ENCODE measurements at regions of chr12 and their contacts with region 1.

Region 1: GRCh38 chr12:6752921-6753771 is at the start of gene MLF2:
- H3K4me3 ChIP-seq: peak within 1 kb of the TSS; percentile 99
- H3K27ac ChIP-seq: peak within 1 kb of the TSS; percentile 93
- H3K4me1 ChIP-seq: 0 out of 2 replicates have a peak, but pooled peaks cover 2% of the 10 kb centered on the region
- CTCF ChIP-seq: no peak; the same call in 1 of the 2 replicates

Region 2: GRCh38 chr12:6662906-6663742 is 90.0 kb before region 1 on chr12 and contains the start of gene ING4:
- CTCF ChIA-PET with region 1: no interaction called
- POLR2A ChIA-PET with region 1: no interaction called
- H3K4me3 ChIP-seq: peak within 1 kb of the TSS; percentile 76
- H3K27ac ChIP-seq: peak within 1 kb of the TSS; percentile 70
- H3K4me1 ChIP-seq: peaks cover 7% of the 10 kb centered on the region; the same call in 1 of the 2 replicates
- CTCF ChIP-seq: no peak

Region 3: DNA sequence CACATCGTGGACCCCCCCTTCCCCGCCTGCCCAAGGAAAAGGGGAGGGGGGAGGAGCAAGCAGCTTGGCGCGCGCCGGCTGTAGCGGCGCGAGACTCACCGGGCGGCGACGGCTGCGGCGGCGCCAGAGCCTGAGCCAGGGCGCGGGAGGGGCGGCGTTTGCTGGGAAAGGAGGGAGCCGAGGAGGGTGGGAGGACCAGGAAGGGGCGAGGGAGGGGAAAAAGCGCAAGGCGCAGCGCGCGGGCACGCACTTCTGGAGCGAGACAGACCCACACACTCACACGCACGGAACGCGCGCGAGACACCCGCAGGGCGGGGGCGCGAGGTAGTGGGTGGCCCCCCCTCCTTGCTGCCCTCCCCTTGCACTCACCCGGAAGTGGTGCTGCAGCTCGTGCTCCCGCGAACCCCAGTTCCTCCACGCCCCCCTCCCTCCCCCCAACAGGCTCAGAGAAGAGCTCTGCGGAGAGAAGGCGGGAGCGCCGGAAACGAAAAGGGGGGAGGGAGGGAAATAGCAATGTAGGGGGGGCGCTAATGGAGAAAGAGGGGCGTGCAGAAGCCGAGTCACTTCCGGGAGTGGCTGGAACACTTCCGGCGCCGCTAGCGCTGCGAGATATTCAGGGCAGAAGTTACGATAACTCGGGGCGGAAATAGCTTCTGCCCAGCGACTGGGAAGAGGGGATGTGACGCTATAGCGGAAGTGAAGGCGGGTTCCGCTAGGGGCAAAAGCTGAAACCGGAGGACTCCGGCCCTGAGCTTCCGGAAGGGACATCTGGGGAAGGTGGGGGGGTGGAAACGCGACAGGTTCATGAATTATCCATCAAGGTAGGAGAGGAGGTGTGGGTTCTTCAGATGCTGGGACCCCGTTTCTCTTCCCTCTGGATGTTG is 63.9 kb before region 1 on chr12 and contains the start of gene ZNF384:
- CTCF ChIA-PET with region 1: interaction called, 6 read pairs
- POLR2A ChIA-PET with region 1: interaction called, 28 read pairs
- H3K4me3 ChIP-seq: peak within 1 kb of the TSS; percentile 73
- H3K27ac ChIP-seq: peak within 1 kb of the TSS; percentile 99
- H3K4me1 ChIP-seq: peaks cover 13% of the 10 kb centered on the region
- CTCF ChIP-seq: peak; percentile 69; the same call in 1 of the 2 replicates

Region 4: GRCh38 chr12:6700646-6701051 is 52.5 kb before region 1 on chr12 and contains the start of gene PIANP:
- CTCF ChIA-PET with region 1: no interaction called
- POLR2A ChIA-PET with region 1: no interaction called
- H3K4me3 ChIP-seq: peak within 1 kb of the TSS; percentile 55
- H3K27ac ChIP-seq: peak within 1 kb of the TSS; percentile 24; the same call in 1 of the 2 replicates
- H3K4me1 ChIP-seq: no peaks in the 10 kb centered on the region
- CTCF ChIP-seq: no peak

Region 5: DNA sequence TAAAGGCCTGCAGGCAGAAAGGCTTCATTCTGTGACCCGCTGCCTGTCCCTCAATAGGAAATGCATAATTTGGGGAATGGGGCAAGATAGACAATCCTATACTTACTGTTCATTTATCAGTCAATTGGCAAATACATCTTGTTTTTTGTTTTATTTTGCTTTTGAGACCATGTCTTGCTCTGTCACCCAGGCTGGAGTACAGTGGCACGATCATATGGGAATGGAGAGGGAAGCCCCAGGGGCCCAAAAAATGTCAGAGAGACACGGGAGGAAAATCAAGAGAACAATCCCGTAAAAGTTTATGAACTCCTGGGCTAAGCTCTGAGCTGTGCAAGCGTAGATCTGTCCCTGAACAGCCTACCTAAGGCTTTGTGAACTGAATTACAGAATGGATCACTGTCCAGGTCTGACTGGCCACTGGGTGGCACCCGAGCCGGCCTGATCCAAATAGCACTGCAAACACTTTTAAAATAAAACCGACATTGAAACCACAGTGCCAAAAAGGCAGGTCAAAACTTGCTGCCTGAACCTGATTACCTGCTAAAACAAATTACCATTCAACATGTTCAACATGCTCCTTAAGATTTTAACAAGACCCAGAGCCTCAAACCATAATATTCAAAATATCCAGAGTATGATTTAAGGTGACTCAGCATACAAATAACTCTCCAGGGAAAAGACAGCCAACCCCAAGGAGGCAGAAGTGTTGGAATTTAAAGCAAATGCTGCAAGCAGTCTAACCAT is 17.5 kb before region 1 on chr12:
- CTCF ChIA-PET with region 1: interaction called, 17 read pairs
- POLR2A ChIA-PET with region 1: interaction called, 13 read pairs
- H3K4me3 ChIP-seq: no peak overlapping the region
- H3K27ac ChIP-seq: no peak overlapping the region
- H3K4me1 ChIP-seq: no peaks in the 10 kb centered on the region
- CTCF ChIP-seq: peak; percentile 64; the same call in 1 of the 2 replicates

Region 6: DNA sequence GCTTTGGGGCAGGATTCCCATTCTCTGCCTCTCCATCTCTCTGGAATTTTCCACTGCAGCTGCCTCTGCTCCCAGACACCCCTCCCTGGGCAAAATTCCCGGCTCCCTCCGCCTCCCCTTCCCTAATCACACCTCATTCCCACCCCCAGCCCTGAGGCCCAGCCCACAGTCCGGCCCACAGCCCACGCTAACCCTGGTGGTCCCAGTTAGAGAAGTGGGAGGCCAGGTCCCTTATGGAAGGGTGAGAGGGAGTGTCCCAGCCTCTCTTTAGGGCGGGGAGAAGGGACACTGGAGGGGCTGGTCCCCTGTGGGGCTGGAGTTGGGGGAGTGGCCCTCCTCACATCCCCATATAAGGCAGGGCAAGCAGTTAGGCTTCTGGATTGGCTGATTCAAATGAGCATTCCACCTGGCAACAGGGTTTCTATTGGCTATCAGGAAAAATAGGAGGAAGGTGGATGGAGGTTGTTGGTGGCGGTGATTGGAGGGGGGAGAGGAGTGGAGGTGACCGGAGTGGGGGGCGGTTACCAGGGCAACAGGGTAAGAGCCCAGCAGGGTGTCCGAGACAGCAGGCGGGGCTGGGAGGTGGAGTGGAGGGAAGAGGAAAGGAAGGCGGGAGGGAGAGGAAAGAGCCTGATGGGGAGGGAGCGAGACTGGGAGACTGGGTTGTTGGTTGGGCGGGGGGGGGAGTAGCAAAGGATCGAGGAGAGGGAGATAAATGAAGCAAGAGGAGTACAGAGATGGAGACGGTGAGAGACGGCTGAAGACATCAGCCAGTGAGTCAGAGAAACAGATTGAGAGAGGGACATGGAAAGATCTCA is 11.1 kb after region 1 on chr12:
- CTCF ChIA-PET with region 1: interaction called, 140 read pairs
- POLR2A ChIA-PET with region 1: interaction called, 79 read pairs
- H3K4me3 ChIP-seq: no peak overlapping the region; the same call in 1 of the 2 replicates
- H3K27ac ChIP-seq: peak overlapping the region; percentile 92
- H3K4me1 ChIP-seq: peaks cover 30% of the 10 kb centered on the region
- CTCF ChIP-seq: no peak

Region 7: DNA sequence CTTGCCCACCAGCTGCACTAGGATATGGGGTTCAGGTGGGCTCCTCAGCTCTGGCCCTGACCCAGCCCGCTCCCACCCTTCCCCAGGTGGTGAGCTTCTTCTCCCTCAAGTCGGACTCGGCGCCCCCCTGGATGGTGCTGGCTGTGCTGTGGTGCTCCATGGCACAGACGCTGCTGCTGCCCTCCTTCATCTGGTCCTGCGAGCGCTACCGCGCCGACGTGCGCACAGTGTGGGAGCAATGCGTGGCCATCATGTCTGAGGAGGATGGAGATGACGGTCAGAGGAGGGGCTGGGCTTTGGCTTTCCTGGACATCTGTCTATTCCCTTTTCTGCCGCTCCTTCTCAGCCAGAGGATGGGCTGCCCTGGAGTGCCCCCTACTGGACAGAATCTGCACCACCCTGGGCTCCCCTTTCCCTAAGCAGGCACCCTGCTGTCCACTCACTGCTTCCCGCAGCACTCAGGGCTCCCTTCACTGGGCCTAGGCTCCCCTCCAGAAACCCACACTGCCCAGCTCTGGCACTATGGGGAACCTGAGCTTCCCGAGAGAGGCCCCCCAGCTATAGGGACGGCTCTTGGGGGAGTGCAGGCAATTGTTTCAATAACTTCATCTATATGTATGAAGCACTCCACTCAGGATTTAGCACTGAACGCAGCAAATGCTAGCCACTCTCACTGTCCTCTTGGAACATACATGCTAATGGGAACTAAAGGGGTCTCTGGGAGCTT is 72.4 kb after region 1 on chr12:
- CTCF ChIA-PET with region 1: interaction called, 116 read pairs
- POLR2A ChIA-PET with region 1: interaction called, 14 read pairs
- H3K4me3 ChIP-seq: no peak overlapping the region
- H3K27ac ChIP-seq: no peak overlapping the region
- H3K4me1 ChIP-seq: peaks cover 6% of the 10 kb centered on the region; the same call in 1 of the 2 replicates
- CTCF ChIP-seq: peak; percentile 96

Region 8: DNA sequence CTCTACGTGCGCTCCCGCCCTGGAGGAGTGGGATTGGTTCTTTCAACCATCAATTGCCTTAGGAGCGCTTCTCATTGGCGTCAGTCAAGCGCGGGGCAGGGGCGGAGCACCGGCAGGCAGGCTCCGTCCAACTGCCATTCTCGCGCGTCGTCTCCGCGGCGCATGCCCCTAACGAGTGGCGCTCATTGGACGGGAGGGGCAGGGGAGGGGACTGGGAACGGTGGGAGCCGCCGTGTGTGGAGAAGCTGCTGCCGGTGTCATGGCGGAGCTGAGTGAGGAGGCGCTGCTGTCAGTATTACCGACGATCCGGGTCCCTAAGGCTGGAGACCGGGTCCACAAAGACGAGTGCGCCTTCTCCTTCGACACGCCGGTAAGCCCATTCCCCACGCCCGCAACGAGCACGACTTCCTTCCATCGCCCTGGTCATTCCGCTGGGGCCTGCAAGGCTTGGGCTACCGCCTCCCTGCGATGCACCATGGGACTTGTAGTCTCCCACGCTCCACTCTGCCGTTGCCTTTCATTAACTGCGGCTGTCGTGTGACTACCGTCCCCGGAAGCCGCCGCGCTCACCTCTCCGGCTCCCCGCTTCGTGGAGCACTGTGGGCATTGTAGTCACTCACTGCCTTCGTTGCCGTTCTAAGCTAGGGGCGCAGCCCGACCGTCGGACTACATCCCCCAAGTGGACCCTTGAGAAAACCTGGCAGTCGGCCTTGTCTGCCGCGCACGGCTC is 98.9 kb after region 1 on chr12 and contains the start of gene USP5:
- CTCF ChIA-PET with region 1: interaction called, 10 read pairs
- POLR2A ChIA-PET with region 1: interaction called, 27 read pairs
- H3K4me3 ChIP-seq: peak within 1 kb of the TSS; percentile 76
- H3K27ac ChIP-seq: peak within 1 kb of the TSS; percentile 58
- H3K4me1 ChIP-seq: peaks cover 11% of the 10 kb centered on the region
- CTCF ChIP-seq: peak; percentile 70

Region 9: GRCh38 chr12:6932766-6933165 is 179.6 kb after region 1 on chr12:
- CTCF ChIA-PET with region 1: no interaction called
- POLR2A ChIA-PET with region 1: no interaction called
- H3K4me3 ChIP-seq: no peak overlapping the region
- H3K27ac ChIP-seq: no peak overlapping the region
- H3K4me1 ChIP-seq: peaks cover 6% of the 10 kb centered on the region
- CTCF ChIP-seq: no peak

Measured in HEK293 (cell line).